B cell (primary cell): ENCODE measurements at regions of chr13 and their contacts with region 1.

Region 1: GRCh38 chr13:40770934-40771618 is at the start of gene MRPS31:
- DNase-seq: peak; percentile 95
- ATAC-seq: peak; percentile 100
- H3K4me3 ChIP-seq: peak within 1 kb of the TSS; percentile 65 to 99 (median 99)
- H3K4me3 Mint-ChIP-seq: peak within 1 kb of the TSS; percentile 100
- H3K27ac ChIP-seq: peak within 1 kb of the TSS; percentile 64 to 88
- H3K27ac Mint-ChIP-seq: peak within 1 kb of the TSS; percentile 97
- H3K4me1 ChIP-seq: peaks cover 12 to 19% of the 10 kb centered on the region in 2 donors
- H3K4me1 Mint-ChIP-seq: peaks cover 21% of the 10 kb centered on the region
- H3K27me3 ChIP-seq: no peaks in the 10 kb centered on the region
- H3K27me3 Mint-ChIP-seq: no peaks in the 10 kb centered on the region
- CTCF ChIP-seq: no peak
- total RNA-seq, gene MRPS31: 29.7 and 34.4 TPM in 2 replicates

Region 2: DNA sequence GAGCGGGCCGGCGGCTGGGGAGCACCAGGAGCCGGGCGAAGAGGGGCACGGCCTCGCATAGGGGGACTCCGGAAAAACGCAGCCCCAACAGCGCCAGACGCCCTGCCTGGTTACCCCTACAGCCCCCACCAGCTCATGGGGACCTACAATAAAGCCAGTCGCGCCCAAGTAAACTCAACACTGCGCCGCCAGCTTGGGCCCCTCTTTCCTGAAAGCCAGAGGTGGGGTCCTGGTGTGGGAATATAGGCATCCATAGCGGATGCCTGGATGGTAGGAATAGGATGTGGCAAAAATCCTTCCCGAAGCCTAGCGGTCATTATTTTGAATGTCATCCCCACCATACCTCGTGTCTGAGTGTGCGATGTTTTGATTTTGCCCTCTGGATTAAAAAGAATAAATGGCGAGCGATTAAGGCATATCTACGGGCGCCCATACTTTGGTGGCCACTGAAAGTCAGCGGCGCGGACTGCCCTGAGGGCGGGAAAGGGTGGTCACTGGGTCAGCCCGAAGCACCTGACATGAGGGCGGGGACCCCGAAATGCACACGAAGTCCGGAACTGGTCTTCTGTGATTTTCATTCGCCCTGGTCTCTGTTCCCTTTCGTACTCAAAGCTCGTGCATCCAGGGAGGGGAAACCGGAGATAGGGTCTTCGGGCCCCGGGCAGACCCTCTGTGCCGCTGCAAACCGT is 1733.1 kb before region 1 on chr13 and contains the starts of genes NHLRC3 and PROSER1:
- CTCF ChIA-PET with region 1: no interaction called
- POLR2A ChIA-PET with region 1: no interaction called
- intact Hi-C with region 1: loop called (anchors 10 kb)
- DNase-seq: peak; percentile 92
- ATAC-seq: peak; percentile 84
- H3K4me3 ChIP-seq: peak within 1 kb of the TSS; percentile 67 to 99 (median 90)
- H3K4me3 Mint-ChIP-seq: peak within 1 kb of the TSS; percentile 92
- H3K27ac ChIP-seq: peak within 1 kb of the TSS; percentile 81 to 95
- H3K27ac Mint-ChIP-seq: peak within 1 kb of the TSS; percentile 100
- H3K4me1 ChIP-seq: peaks cover 30 to 35% of the 10 kb centered on the region in 2 donors
- H3K4me1 Mint-ChIP-seq: peaks cover 55% of the 10 kb centered on the region
- H3K27me3 ChIP-seq: no peaks in the 10 kb centered on the region
- H3K27me3 Mint-ChIP-seq: no peaks in the 10 kb centered on the region
- CTCF ChIP-seq: no peak
- total RNA-seq, gene NHLRC3: 38.8 and 41.9 TPM in 2 replicates
- total RNA-seq, gene PROSER1: 63.5 and 64.0 TPM in 2 replicates

Region 3: GRCh38 chr13:40789275-40790133 is 18.4 kb after region 1 on chr13 and contains the start of gene SLC25A15:
- CTCF ChIA-PET with region 1: interaction called, 46 read pairs
- POLR2A ChIA-PET with region 1: interaction called, 4 read pairs
- intact Hi-C with region 1: loop called (anchors 1 kb)
- DNase-seq: peak; percentile 82
- ATAC-seq: peak; percentile 95
- H3K4me3 ChIP-seq: peak within 1 kb of the TSS; percentile 21 to 73 (median 69)
- H3K4me3 Mint-ChIP-seq: peak within 1 kb of the TSS; percentile 84
- H3K27ac ChIP-seq: peak within 1 kb of the TSS; percentile 29 to 57
- H3K27ac Mint-ChIP-seq: peak within 1 kb of the TSS; percentile 81
- H3K4me1 ChIP-seq: peaks cover 9 to 13% of the 10 kb centered on the region in 2 donors
- H3K4me1 Mint-ChIP-seq: peaks cover 10% of the 10 kb centered on the region
- H3K27me3 ChIP-seq: no peaks in the 10 kb centered on the region
- H3K27me3 Mint-ChIP-seq: no peaks in the 10 kb centered on the region
- CTCF ChIP-seq: peak; percentile 19
- total RNA-seq, gene SLC25A15: 3.8 and 4.5 TPM in 2 replicates

Region 4: GRCh38 chr13:41193919-41194824 is 423.1 kb after region 1 on chr13 and contains the start of gene KBTBD7:
- CTCF ChIA-PET with region 1: no interaction called
- POLR2A ChIA-PET with region 1: no interaction called
- intact Hi-C with region 1: loop called (anchors 1 kb)
- DNase-seq: peak; percentile 90
- ATAC-seq: peak; percentile 94
- H3K4me3 ChIP-seq: peak within 1 kb of the TSS; percentile 59 to 92 (median 88)
- H3K4me3 Mint-ChIP-seq: peak within 1 kb of the TSS; percentile 96
- H3K27ac ChIP-seq: peak within 1 kb of the TSS; percentile 32 to 63
- H3K27ac Mint-ChIP-seq: peak within 1 kb of the TSS; percentile 94
- H3K4me1 ChIP-seq: peaks cover 33 to 34% of the 10 kb centered on the region in 2 donors
- H3K4me1 Mint-ChIP-seq: peaks cover 45% of the 10 kb centered on the region
- H3K27me3 ChIP-seq: no peaks in the 10 kb centered on the region
- H3K27me3 Mint-ChIP-seq: no peaks in the 10 kb centered on the region
- CTCF ChIP-seq: no peak
- total RNA-seq, gene KBTBD7: 8.4 and 9.2 TPM in 2 replicates

Region 5: GRCh38 chr13:42239644-42240043 is 1468.6 kb after region 1 on chr13:
- CTCF ChIA-PET with region 1: no interaction called
- POLR2A ChIA-PET with region 1: no interaction called
- intact Hi-C with region 1: no loop called
- DNase-seq: no peak
- ATAC-seq: no peak
- H3K4me3 ChIP-seq: no peak overlapping the region
- H3K4me3 Mint-ChIP-seq: no peak overlapping the region
- H3K27ac ChIP-seq: no peak overlapping the region
- H3K27ac Mint-ChIP-seq: no peak overlapping the region
- H3K4me1 ChIP-seq: no peaks in the 10 kb centered on the region
- H3K4me1 Mint-ChIP-seq: no peaks in the 10 kb centered on the region
- H3K27me3 ChIP-seq: no peaks in the 10 kb centered on the region
- H3K27me3 Mint-ChIP-seq: peaks cover 4% of the 10 kb centered on the region
- CTCF ChIP-seq: no peak